ENCODE measurements at regions of chr21 and their contacts with region 1.

Region 1: DNA sequence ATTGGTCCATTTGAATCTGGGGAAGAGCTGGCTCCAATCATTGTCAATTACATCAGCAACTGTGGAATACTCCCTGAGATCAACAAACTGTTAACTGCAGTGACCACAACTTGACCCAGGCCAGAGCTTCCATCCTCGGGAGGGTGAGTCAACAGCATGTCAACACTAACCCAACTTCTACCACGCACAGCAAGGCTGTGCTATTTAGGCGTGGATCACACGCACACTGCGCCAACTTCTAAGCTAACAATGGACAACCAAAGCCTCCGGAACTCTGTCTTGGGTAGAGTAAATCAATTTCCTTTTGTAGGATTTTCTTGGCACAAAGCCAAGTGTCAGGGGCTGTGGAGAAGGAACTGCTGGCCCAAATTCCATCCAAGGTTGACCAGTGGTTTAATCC is 30.4 kb downstream of the APP start:
- ATAC-seq: peak in 6 of 8 experiments; percentile 24 to 98 (median 86)
- H3K4me3 ChIP-seq: no peak overlapping the region
- H3K27ac ChIP-seq: no peak overlapping the region
- H3K4me1 ChIP-seq: peaks cover 0 to 4% of the 10 kb centered on the region in 2 donors

Region 2: GRCh38 chr21:26041431-26042180 is 98.6 kb before region 1 on chr21:
- in situ Hi-C with region 1: loop called in 1 of 9 experiments (anchors 25 kb)
- ATAC-seq: peak; percentile 23 to 90 (median 58)
- H3K4me3 ChIP-seq: no peak overlapping the region
- H3K27ac ChIP-seq: no peak overlapping the region
- H3K4me1 ChIP-seq: peaks cover 0 to 3% of the 10 kb centered on the region in 2 donors

Region 3: GRCh38 chr21:26057477-26058170 is 82.6 kb before region 1 on chr21:
- in situ Hi-C with region 1: no loop called
- ATAC-seq: no peak
- H3K4me3 ChIP-seq: no peak overlapping the region
- H3K27ac ChIP-seq: no peak overlapping the region
- H3K4me1 ChIP-seq: peaks cover 0 to 6% of the 10 kb centered on the region in 2 donors

Measured in motor neuron (in vitro differentiated cells).